ENCODE measurements at regions of chr3 and their contacts with region 1.

Region 1: DNA sequence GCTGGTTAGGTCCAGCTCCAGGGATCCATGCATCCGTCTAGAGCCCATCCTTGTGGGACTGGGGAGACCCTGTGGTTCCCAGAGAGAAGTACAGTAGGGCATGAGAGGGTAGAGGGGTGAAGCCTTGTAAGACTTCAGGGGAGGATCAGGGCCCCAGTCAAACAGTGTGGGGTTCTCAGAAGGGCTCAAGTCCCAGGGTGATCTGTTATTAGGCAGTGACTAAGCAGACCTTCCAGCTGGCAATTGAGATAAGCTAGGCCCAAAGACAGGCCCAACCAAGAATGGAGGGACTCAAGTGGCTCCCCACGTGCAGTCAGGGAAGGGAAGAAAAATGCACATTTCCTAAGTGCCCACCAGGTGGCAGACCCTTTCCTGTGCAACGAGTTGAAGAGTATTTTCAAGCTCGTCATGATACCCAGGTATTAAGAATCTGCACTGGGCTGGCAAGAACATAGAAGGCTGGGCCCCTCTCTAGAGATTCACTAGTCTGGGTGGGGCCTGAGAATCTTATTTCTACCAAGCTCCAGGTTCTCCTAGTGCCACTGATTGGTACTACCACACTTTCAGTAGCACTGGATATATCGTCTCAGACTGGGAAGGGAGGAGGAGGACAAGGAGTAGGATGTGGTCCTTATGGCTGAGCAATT is 240.8 kb downstream of the NR1D2 start:
- DNase-seq: peak; percentile 44
- H3K4me3 ChIP-seq: no peak overlapping the region
- H3K27ac ChIP-seq: no peak overlapping the region
- H3K4me1 ChIP-seq: peaks cover 0 to 8% of the 10 kb centered on the region in 2 experiments; a peak in 1 of 4 replicates
- H3K27me3 ChIP-seq: no peaks in the 10 kb centered on the region
- CTCF ChIP-seq: peak; percentile 79
- EP300 ChIP-seq: no peak
- RAD21 ChIP-seq: peak; percentile 82

Region 2: DNA sequence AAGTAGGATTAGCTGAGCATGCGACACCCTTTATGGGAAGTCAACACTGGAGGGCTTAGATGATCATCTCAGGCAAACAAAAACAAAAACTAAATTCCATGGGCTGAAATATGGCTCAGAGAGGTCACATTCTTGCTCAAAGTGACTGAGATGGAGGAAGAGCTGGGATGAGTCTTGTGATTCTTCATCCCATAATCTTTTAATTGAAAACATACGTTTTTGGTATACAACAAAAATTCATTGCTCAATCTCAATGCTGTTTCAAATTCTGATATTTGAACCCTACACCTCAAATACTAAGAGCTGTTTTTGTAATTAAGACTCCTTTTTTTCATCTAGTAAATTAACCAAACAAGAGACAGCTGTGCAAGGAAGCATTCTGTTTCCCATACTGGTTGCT is 16.2 kb after region 1 on chr3:
- CTCF ChIA-PET with region 1: interaction called, 10 read pairs
- POLR2A ChIA-PET with region 1: no interaction called
- DNase-seq: no peak
- H3K4me3 ChIP-seq: no peak overlapping the region
- H3K27ac ChIP-seq: no peak overlapping the region
- H3K4me1 ChIP-seq: peaks cover 8 to 32% of the 10 kb centered on the region in 2 experiments; a peak in 3 of 4 replicates
- H3K27me3 ChIP-seq: no peaks in the 10 kb centered on the region
- CTCF ChIP-seq: no peak
- EP300 ChIP-seq: no peak
- RAD21 ChIP-seq: no peak

Region 3: GRCh38 chr3:24237971-24238767 is 52.3 kb after region 1 on chr3:
- CTCF ChIA-PET with region 1: interaction called, 129 read pairs
- POLR2A ChIA-PET with region 1: no interaction called
- DNase-seq: peak; percentile 61
- H3K4me3 ChIP-seq: 0 out of 4 replicates have a peak overlapping the region, but pooled peaks of 1 of the 2 experiments have one; percentile 36
- H3K27ac ChIP-seq: peak overlapping the region; percentile 47 to 69; a peak in 3 of 4 replicates
- H3K4me1 ChIP-seq: peaks cover 0 to 18% of the 10 kb centered on the region in 2 experiments; a peak in 2 of 4 replicates
- H3K27me3 ChIP-seq: no peaks in the 10 kb centered on the region
- CTCF ChIP-seq: peak; percentile 71
- EP300 ChIP-seq: peak; percentile 58 to 91
- RAD21 ChIP-seq: peak; percentile 90

Measured in SK-N-SH (cell line).